Endothelial cell of umbilical vein (primary cell): ENCODE measurements at regions of chr1 and their contacts with region 1.

Region 1: GRCh38 chr1:180791806-180792205 is 120.9 kb upstream of the KIAA1614 start:
- DNase-seq: peak; percentile 24
- H3K4me3 ChIP-seq: no peak overlapping the region
- H3K27ac ChIP-seq: no peak overlapping the region
- H3K4me1 ChIP-seq: peaks cover 16% of the 10 kb centered on the region
- H3K27me3 ChIP-seq: no peaks in the 10 kb centered on the region
- CTCF ChIP-seq: no peak
- POLR2A ChIP-seq: no peak

Region 2: GRCh38 chr1:180631766-180632325 is 160.0 kb before region 1 on chr1 and contains the start of gene XPR1:
- CTCF ChIA-PET with region 1: no interaction called
- POLR2A ChIA-PET with region 1: no interaction called
- dilution Hi-C with region 1: no loop called
- intact Hi-C with region 1: loop called (anchors 5 kb)
- DNase-seq: peak; percentile 99
- H3K4me3 ChIP-seq: peak within 1 kb of the TSS; percentile 71 to 90 (median 87)
- H3K27ac ChIP-seq: peak within 1 kb of the TSS; percentile 34
- H3K4me1 ChIP-seq: peaks cover 13% of the 10 kb centered on the region
- H3K27me3 ChIP-seq: peaks cover 3 to 5% of the 10 kb centered on the region in 2 experiments
- CTCF ChIP-seq: peak in 1 of 2 donors; percentile 26
- POLR2A ChIP-seq: peak; percentile 52
- total RNA-seq, gene XPR1: 26.7 and 29.3 TPM in 2 replicates